ENCODE measurements at regions of chr15 and their contacts with region 1.

Region 1: DNA sequence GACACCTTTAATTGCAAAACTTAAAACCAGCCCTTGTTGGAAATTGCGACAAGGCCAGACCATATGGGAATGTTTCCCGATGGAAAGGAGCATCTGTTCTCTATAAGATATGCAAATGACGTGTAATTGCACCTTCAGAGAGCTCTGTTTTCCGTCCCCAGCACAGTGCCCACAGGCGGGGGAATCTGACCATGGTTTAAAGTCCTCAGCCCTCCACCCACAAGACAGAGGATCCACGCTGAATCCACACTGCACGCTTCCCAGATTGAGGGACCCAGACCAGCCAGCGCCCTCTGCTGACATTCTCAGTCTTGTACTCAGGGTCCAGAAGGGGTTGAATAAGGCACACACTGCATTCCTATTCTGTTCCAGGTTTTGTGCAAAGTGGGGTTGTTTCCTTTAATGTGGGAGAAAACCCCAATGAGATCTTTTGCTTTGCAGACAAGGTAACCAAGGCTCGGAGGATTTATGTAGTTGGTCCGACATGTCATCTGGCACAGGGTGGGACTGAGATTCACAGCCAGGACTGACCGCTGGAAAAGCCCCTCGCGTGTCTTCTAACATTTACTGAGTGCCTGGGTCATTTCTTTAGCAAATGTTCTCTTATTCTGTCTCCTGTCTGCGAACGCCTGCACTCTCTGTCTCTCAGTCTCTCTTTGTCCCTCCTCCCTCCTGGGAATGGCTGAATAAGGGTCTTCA is 36.8 kb upstream of the KLHL25 start:
- DNase-seq: peak; percentile 71 to 86 (median 83)
- ATAC-seq: peak; percentile 88 to 91
- H3K4me3 ChIP-seq: no peak overlapping the region
- H3K27ac ChIP-seq: no peak overlapping the region
- H3K4me1 ChIP-seq: no peaks in the 10 kb centered on the region
- H3K27me3 ChIP-seq: no peaks in the 10 kb centered on the region

Region 2: GRCh38 chr15:85296615-85297402 is 534.8 kb before region 1 on chr15:
- intact Hi-C with region 1: loop called in 3 of 4 experiments (anchors 10 kb)
- DNase-seq: peak in 2 of 3 donors; percentile 46 to 72
- ATAC-seq: peak; percentile 93 to 94
- H3K4me3 ChIP-seq: peak overlapping the region; percentile 46
- H3K27ac ChIP-seq: no peak overlapping the region
- H3K4me1 ChIP-seq: no peaks in the 10 kb centered on the region
- H3K27me3 ChIP-seq: no peaks in the 10 kb centered on the region

Region 3: DNA sequence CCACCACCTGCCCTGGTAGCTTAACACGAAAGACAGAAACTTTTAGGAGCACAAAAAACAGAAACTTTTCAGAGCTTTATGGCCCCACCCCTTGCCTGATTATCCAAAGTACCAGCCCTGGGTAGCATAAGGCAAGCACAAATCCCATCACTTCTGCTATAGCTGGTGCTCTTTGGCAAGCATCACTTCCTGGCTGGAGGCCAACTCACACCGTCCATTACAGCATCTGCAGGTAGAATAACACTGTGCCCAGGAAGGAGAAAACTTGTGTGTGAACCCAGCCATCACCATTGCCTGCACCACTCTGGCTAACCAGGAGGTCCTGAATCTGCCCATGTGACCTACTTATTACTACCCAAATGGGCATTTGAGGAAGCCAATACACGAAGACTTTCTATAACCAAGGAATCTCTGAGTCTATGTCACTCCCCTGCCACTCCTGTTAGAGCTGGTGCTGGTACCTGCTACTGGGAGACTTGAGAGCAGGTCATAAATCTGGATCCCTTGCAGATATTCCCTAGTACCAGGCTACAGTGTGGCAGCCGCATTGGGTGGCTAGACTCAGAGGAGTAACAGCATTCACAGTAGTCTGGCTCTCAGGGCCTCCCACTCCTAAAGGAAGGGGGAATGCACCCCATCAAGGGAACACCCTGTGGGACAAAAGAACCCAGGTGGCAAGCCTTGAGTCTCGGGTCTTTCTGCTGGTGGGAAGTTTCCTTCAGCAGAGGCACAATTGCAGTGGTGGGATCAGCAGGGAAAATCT is 524.4 kb before region 1 on chr15:
- intact Hi-C with region 1: loop called in 1 of 4 experiments (anchors 10 kb)
- DNase-seq: no peak
- ATAC-seq: no peak
- H3K4me3 ChIP-seq: no peak overlapping the region
- H3K27ac ChIP-seq: no peak overlapping the region
- H3K4me1 ChIP-seq: no peaks in the 10 kb centered on the region
- H3K27me3 ChIP-seq: no peaks in the 10 kb centered on the region

Region 4: DNA sequence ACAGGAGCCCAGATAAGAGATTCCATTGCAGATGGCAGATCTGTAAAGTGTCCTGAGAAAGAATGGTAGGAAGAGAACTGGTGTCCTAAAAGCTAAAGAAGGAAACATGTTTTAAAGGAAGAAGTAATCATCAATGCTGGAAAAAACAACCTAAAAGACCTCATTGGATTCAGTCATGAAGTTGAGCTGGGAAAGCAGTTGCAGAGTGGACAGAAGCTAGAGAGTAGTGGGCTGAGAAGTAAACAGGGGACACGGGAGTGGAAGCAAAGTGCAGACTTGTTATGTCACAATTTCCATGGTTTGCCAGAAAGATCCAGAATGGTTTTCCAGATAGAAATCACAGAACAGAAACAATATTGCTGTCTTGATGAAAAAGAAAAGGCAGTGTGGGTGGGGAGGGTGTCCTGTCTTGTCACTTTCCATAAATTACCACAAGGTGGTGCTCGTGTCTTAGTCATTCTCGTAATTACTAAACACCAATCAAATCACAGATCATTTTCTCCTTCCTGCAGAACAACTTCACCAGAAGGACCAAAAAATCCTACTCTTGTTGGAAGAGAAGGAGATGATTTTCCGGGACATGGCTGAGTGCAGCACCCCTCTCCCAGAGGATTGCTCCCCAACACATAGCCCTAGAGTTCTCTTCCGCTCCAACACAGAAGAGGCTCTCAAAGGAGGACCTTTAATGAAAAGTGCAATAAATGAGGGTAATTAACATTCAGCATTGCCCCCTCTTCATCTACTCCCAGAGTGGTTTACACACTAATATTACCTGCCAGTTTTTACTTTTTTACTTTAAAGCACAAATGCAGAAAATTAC is 101.4 kb before region 1 on chr15:
- intact Hi-C with region 1: loop called in 2 of 4 experiments (anchors 2 to 5 kb)
- DNase-seq: no peak
- ATAC-seq: peak; percentile 57 to 62
- H3K4me3 ChIP-seq: no peak overlapping the region
- H3K27ac ChIP-seq: no peak overlapping the region
- H3K4me1 ChIP-seq: no peaks in the 10 kb centered on the region
- H3K27me3 ChIP-seq: no peaks in the 10 kb centered on the region

Region 5: GRCh38 chr15:85742186-85742821 is 89.3 kb before region 1 on chr15:
- intact Hi-C with region 1: loop called in 1 of 4 experiments (anchors 5 kb)
- DNase-seq: no peak
- ATAC-seq: peak; percentile 20 to 25
- H3K4me3 ChIP-seq: no peak overlapping the region
- H3K27ac ChIP-seq: peak overlapping the region; percentile 17
- H3K4me1 ChIP-seq: no peaks in the 10 kb centered on the region
- H3K27me3 ChIP-seq: no peaks in the 10 kb centered on the region

Region 6: DNA sequence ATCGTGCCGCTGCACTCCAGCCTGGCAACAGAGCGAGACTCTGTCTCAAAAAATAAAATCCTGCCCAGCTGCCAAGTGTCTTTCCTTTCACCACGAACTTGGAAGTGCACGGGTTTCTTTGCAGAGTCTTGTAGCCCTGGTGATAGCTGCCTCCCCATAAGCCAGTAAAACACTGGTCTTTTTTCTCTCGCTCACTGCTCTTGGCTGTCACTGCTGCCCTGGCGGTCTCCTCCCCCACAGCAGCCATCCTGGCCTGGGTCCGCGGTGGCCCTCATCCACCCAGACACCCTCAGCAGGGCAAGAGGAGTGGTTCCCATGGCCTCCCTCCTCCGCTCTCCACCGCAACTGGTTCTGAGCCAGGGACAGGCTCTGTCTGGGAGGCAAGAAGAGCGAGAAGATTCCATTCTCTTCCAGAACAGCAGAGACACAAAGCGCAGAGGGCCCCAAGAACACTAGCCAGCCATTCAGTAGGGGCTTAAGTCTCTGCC is 81.2 kb before region 1 on chr15:
- intact Hi-C with region 1: loop called in 1 of 4 experiments (anchors 10 kb)
- DNase-seq: peak; percentile 91 to 95 (median 95)
- ATAC-seq: peak; percentile 75 to 82
- H3K4me3 ChIP-seq: no peak overlapping the region
- H3K27ac ChIP-seq: peak overlapping the region; percentile 21
- H3K4me1 ChIP-seq: peaks cover 12% of the 10 kb centered on the region
- H3K27me3 ChIP-seq: no peaks in the 10 kb centered on the region

Measured in right cardiac atrium (tissue), 5 donors.